H1 (cell line): ENCODE measurements at regions of chr6 and their contacts with region 1.

Region 1: DNA sequence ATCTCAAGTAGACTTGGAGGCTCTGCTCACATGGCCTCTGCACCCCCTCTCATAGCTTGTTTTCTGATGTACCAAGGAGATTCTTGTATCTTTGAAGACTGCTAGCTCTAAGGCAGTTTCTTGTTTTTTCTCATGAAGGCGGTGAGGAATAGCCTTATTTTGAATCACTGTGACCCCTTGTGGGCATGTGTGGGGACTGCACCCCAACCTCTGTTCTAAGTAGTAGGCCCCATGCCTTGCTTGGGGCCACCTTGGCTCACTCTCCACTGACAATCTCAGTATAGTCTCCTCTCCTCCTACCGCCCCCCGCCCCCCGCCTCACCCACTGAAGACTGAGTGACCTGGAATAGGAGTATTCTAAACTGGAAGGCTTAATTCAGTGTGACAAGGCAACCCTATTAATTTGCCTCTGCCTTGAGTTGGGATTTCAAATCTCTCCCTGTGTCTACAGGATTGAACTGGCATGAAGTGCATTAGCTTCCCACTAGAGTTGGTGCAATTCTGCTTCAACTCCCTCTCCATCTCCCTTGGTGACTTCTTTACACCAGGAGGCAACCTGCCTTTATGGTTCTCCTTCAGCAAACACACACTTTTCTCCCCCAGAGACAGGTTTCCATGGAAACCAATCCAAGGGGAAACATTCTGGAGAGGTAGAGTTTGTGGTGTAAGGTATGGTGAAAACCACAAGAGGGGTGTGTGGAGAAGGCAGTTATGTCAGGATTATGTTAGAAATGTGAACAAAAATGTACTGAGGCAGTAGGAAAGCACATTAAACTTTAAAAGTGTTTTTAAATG is 75.5 kb upstream of the ECI2 start:
- DNase-seq: peak; percentile 49 to 87
- H3K4me3 ChIP-seq: no peak overlapping the region
- H3K27ac ChIP-seq: no peak overlapping the region
- H3K4me1 ChIP-seq: no peaks in the 10 kb centered on the region
- H3K27me3 ChIP-seq: no peaks in the 10 kb centered on the region
- CTCF ChIP-seq: peak; percentile 70 to 85 (median 75)
- EP300 ChIP-seq: no peak
- POLR2A ChIP-seq: no peak
- RAD21 ChIP-seq: peak; percentile 80 to 84

Region 2: DNA sequence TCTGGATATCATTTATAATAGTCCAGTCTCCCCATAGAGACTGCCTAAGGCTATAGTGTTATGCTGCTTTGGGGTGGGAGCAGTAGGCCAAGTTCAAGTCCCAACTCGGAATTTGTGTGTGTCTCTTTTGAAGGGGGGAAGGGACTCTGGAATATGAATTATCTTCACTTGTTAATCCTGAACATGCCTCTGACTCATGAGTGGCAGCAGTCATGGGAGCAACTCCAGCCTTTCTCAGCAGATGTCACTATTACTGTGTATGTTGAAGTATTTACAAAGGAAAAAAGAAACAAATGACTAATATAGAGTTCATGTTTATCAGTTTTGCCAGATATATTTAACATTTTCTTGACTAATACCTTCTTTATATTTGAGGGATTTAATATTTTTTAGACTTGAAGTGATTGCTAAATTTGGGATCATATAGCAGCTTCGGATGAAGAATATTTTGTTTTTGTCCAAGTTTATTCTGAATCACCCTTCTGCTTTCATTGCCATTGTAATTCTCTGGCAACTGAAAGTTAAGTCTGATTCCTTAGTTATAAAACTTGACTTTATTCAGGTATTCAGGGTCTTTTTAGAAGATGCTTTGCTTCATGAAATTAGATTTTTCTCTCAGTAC is 155.3 kb before region 1 on chr6:
- CTCF ChIA-PET with region 1: interaction called, 11 read pairs
- POLR2A ChIA-PET with region 1: no interaction called
- DNase-seq: no peak
- H3K4me3 ChIP-seq: no peak overlapping the region
- H3K27ac ChIP-seq: no peak overlapping the region
- H3K4me1 ChIP-seq: no peaks in the 10 kb centered on the region
- H3K27me3 ChIP-seq: no peaks in the 10 kb centered on the region
- CTCF ChIP-seq: no peak
- EP300 ChIP-seq: no peak
- POLR2A ChIP-seq: no peak
- RAD21 ChIP-seq: peak; percentile 27 to 30; a peak in 3 of 4 replicates

Region 3: DNA sequence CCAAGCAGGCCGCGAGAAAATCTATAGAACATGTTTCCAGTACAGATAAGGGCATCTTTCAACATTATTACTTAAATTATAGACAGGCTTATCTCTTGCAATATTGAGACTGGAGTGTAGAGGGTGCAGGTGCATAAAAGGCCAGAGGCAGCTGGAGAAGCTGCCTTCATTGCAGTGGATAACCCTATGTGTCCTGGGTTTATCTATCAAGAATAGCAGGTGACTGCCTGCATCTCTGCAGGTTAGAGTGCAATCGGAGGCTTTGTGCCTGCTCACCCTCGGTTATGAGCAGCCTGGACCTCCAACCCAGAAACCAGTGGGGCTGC is 46.7 kb before region 1 on chr6:
- CTCF ChIA-PET with region 1: interaction called, 14 read pairs
- POLR2A ChIA-PET with region 1: no interaction called
- DNase-seq: no peak
- H3K4me3 ChIP-seq: no peak overlapping the region
- H3K27ac ChIP-seq: no peak overlapping the region
- H3K4me1 ChIP-seq: peaks cover 0 to 6% (median 3%) of the 10 kb centered on the region in 4 experiments; a peak in 3 of 7 replicates
- H3K27me3 ChIP-seq: no peaks in the 10 kb centered on the region
- CTCF ChIP-seq: no peak
- EP300 ChIP-seq: no peak
- POLR2A ChIP-seq: no peak
- RAD21 ChIP-seq: no peak

Region 4: DNA sequence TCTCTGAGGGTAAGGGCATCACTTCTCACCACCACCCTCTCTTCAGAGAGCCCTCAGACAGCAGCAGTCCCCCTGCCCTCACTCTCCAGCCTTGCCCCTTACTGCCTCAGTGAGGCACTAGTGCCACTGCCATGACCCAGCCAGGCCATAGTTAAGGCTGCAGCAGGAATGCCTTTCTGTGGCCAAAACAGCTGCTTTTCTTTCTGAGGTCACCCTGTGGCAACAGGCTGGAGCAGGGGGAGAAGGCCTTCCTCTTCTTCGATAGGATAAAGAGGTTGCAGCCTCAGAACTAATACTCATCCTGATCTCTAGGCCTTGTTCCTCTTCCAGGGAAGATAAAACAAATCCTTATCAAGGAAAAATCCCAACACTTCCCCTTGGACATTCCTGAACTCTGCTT is 18.7 kb before region 1 on chr6:
- CTCF ChIA-PET with region 1: interaction called, 14 read pairs
- POLR2A ChIA-PET with region 1: no interaction called
- DNase-seq: no peak
- H3K4me3 ChIP-seq: no peak overlapping the region
- H3K27ac ChIP-seq: no peak overlapping the region
- H3K4me1 ChIP-seq: no peaks in the 10 kb centered on the region
- H3K27me3 ChIP-seq: no peaks in the 10 kb centered on the region
- CTCF ChIP-seq: no peak
- EP300 ChIP-seq: no peak
- POLR2A ChIP-seq: no peak
- RAD21 ChIP-seq: no peak